Posterior vena cava (tissue), 2 donors: ENCODE measurements at regions of chr1 and their contacts with region 1.

Region 1: GRCh38 chr1:10494754-10495474 is 20.2 kb downstream of the PEX14 start:
- DNase-seq: peak; percentile 91

Region 2: GRCh38 chr1:10186331-10187025 is 308.4 kb before region 1 on chr1:
- intact Hi-C with region 1: no loop called
- DNase-seq: peak; percentile 10

Region 3: GRCh38 chr1:10424034-10424433 is 70.9 kb before region 1 on chr1:
- intact Hi-C with region 1: no loop called
- DNase-seq: peak; percentile 88

Region 4: DNA sequence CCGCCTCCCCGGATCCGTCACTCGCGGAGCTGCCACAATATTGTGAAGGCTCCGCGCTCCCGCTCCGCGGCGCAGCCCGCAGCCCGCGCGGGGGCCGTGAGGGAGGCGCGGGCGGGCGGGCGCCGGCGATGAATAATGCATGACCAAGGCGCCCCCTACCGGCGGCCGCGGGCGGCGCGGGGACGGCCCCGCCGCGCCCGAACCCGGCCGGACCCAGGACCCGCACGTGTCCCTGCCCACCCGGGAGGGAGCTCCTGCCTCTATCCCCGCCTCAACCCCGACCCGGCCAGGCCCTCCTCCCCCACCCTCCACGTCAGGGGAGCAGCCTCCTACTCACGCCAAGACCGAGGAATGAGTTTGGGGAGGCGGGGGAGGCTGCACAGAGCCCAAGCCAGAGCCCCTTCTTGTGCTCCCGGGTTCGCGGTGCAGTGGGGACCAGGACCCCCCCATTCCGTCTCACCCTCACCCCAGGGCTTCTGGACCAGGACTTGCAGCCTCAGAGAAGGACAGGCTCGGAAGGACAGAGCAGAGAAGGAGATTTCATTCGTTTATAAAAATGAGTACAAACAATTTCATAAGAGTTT is 372.3 kb after region 1 on chr1:
- intact Hi-C with region 1: loop called in 1 of 2 experiments (anchors 5 kb)
- DNase-seq: no peak

Region 5: GRCh38 chr1:10941891-10942541 is 447.1 kb after region 1 on chr1:
- intact Hi-C with region 1: loop called in 1 of 2 experiments (anchors 10 kb)
- DNase-seq: peak; percentile 88